CD8-positive, alpha-beta memory T cell (primary cell): ENCODE measurements at regions of chr1 and their contacts with region 1.

Region 1: DNA sequence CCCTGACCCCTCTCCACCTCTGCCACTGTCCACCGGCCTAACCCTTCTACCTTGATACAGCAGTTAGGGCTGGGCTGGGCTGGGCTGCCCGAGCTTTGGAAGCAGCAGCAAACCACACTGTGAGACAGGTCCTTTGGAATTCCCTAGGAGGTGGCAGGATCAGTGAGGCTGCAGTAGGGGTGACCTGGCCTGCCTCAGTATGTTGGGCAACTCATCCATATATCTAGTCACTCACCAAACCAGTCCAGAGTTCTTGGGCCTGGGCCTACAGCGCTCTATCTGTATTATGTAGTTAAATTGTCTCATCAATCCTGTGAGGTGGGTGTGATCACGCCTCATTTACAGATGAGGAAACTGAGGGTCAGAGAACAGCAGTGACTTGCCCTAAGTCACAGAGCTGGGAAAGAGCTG is 13.3 kb upstream of the SYNC start:
- DNase-seq: no peak
- H3K4me3 ChIP-seq: no peak overlapping the region
- H3K4me3 Mint-ChIP-seq: peak overlapping the region in 1 of 7 donors; percentile 45
- H3K27ac ChIP-seq: no peak overlapping the region
- H3K27ac Mint-ChIP-seq: peak overlapping the region in 1 of 8 donors; percentile 4
- H3K4me1 ChIP-seq: no peaks in the 10 kb centered on the region
- H3K4me1 Mint-ChIP-seq: peaks cover 4 to 22% (median 12%) of the 10 kb centered on the region in 3 donors
- H3K27me3 ChIP-seq: no peaks in the 10 kb centered on the region
- H3K27me3 Mint-ChIP-seq: peaks cover 5 to 9% of the 10 kb centered on the region in 2 donors

Region 2: GRCh38 chr1:32686387-32686786 is 29.5 kb before region 1 on chr1:
- CTCF ChIA-PET with region 1: interaction called, 11 read pairs
- POLR2A ChIA-PET with region 1: no interaction called
- DNase-seq: no peak
- H3K4me3 ChIP-seq: no peak overlapping the region
- H3K4me3 Mint-ChIP-seq: no peak overlapping the region
- H3K27ac ChIP-seq: no peak overlapping the region
- H3K27ac Mint-ChIP-seq: no peak overlapping the region
- H3K4me1 ChIP-seq: no peaks in the 10 kb centered on the region
- H3K4me1 Mint-ChIP-seq: no peaks in the 10 kb centered on the region
- H3K27me3 ChIP-seq: no peaks in the 10 kb centered on the region
- H3K27me3 Mint-ChIP-seq: no peaks in the 10 kb centered on the region

Region 3: DNA sequence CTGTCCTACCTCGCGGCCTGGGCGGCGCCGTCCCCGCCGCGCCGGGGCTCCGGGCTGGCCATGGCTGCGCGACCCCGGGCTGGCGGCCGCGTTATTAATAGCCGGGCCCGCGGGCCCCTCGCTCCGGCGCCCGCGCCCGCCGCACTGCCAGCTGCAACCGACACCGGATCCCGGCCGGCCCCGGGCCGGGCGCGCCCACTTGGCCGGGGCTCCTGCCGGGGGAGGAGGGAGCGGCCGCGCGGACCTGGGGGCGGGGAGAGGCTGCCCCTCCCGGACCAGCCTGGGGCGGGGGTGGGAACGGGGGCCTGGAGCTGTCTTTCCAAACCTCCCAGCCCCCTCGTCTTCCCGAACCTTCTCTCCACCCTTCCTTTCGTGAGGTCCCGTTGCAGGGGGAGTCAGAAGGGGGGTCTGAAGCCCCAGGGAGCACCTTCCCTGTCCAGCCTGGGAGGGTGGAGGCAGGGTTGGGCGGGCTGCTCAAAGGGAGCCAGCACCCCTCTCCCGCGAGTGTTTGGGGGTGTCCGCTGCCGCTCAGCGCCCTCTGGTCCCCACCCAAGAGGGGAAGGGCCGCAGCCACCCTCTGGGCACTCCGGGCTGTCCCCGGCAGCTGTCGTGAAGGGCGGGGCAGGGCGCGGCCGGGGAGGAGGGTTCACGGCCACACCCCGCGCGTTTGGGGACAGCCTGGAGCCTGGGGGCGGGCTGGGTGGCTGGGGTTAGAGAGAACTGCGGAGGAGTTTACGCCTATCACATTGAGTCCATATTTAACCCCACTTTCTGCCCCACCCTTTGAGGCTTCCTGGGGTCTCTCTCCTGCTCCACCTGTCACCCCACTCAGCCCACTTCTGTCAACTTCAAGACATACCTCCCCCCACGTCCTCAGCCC is 13.1 kb before region 1 on chr1 and contains the start of gene SYNC:
- CTCF ChIA-PET with region 1: interaction called, 14 read pairs
- POLR2A ChIA-PET with region 1: no interaction called
- DNase-seq: no peak
- H3K4me3 ChIP-seq: no peak within 1 kb of the TSS
- H3K4me3 Mint-ChIP-seq: peak within 1 kb of the TSS; percentile 18 to 72 (median 66)
- H3K27ac ChIP-seq: peak within 1 kb of the TSS; percentile 39
- H3K27ac Mint-ChIP-seq: peak within 1 kb of the TSS in 2 of 8 donors; percentile 17 to 97
- H3K4me1 ChIP-seq: peaks cover 8% of the 10 kb centered on the region
- H3K4me1 Mint-ChIP-seq: peaks cover 7 to 13% (median 11%) of the 10 kb centered on the region in 3 donors
- H3K27me3 ChIP-seq: peaks cover 22% of the 10 kb centered on the region
- H3K27me3 Mint-ChIP-seq: peaks cover 29 to 46% of the 10 kb centered on the region in 2 donors
- total RNA-seq, gene SYNC: not detected

Region 4: DNA sequence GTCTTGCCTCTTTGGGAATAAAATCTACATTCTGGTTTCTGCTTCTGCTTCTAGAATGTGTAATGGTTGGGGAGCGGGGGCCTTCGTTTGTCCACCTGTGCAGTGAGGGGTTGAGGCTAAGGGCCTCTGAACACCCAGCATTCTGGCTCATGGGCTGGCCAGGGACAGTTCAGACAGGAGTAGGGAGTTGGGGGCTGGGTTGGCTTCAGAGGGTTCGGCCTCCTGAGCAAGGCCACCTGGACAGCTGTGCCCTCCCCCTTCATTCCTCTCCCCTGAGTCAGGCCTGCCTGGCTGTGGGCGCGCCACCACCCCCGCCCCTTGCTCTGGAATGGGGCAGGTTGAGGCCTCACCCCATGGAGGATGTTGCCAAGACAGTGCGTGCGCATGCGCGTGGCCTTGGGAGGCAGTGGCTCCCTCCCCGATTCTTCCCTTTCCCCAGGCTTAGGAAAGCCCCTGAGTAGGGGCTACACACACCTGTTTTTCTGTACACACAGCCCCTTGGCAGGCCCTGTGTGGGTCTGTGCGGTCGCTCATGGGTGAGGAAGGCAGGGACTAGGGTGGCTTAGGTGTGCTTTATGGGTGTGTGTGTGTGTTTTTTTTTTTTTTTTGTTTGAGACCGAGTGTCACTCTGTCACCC is 44.2 kb after region 1 on chr1:
- CTCF ChIA-PET with region 1: interaction called, 10 read pairs
- POLR2A ChIA-PET with region 1: interaction called, 5 read pairs
- DNase-seq: no peak
- H3K4me3 ChIP-seq: no peak overlapping the region
- H3K4me3 Mint-ChIP-seq: no peak overlapping the region
- H3K27ac ChIP-seq: no peak overlapping the region
- H3K27ac Mint-ChIP-seq: peak overlapping the region in 5 of 8 donors; percentile 1 to 64 (median 27)
- H3K4me1 ChIP-seq: peaks cover 30% of the 10 kb centered on the region
- H3K4me1 Mint-ChIP-seq: peaks cover 7 to 30% (median 13%) of the 10 kb centered on the region in 3 donors
- H3K27me3 ChIP-seq: no peaks in the 10 kb centered on the region
- H3K27me3 Mint-ChIP-seq: no peaks in the 10 kb centered on the region

Region 5: DNA sequence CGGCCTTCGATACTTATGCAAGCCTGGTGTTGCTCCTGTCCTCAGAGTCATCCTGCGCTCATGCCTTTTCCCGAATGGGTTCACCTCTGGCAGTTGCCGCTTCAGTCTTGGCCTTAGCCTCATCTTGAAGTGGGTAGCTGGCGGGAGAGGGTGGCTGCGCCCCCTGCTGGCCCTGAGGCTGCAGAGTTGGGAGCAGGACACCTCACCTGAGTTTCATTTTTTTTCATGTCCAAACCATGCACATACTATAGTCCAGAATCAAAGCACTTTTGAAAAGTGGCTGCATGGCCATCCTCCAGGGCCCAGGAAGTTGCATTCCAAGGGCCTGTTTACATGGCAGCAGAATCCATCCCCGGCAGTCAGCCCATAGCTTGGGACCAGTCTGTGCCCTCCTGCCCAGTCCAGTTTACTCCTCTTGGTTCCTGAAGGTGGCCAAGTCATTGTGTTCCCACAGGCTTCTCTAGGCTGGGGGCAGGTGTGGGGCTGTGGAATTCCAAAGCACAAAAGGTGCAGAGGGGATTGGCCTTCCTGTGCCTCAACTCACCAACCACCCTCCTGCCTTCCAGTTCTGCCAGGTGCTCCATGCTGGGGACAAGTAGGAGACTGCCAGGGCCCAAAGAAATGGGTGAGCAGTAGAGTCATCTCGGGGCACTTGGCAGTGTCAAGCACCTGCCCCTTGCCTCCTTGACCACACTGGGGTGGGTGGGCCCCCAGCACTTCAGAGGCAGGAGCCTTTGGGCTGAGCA is 57.3 kb after region 1 on chr1:
- CTCF ChIA-PET with region 1: interaction called, 114 read pairs
- POLR2A ChIA-PET with region 1: no interaction called
- DNase-seq: peak; percentile 54 to 81 (median 61)
- H3K4me3 ChIP-seq: no peak overlapping the region
- H3K4me3 Mint-ChIP-seq: no peak overlapping the region
- H3K27ac ChIP-seq: no peak overlapping the region
- H3K27ac Mint-ChIP-seq: peak overlapping the region in 6 of 8 donors; percentile 21 to 67 (median 53)
- H3K4me1 ChIP-seq: peaks cover 4% of the 10 kb centered on the region
- H3K4me1 Mint-ChIP-seq: peaks cover 14 to 23% (median 17%) of the 10 kb centered on the region in 3 donors
- H3K27me3 ChIP-seq: no peaks in the 10 kb centered on the region
- H3K27me3 Mint-ChIP-seq: no peaks in the 10 kb centered on the region

Region 6: DNA sequence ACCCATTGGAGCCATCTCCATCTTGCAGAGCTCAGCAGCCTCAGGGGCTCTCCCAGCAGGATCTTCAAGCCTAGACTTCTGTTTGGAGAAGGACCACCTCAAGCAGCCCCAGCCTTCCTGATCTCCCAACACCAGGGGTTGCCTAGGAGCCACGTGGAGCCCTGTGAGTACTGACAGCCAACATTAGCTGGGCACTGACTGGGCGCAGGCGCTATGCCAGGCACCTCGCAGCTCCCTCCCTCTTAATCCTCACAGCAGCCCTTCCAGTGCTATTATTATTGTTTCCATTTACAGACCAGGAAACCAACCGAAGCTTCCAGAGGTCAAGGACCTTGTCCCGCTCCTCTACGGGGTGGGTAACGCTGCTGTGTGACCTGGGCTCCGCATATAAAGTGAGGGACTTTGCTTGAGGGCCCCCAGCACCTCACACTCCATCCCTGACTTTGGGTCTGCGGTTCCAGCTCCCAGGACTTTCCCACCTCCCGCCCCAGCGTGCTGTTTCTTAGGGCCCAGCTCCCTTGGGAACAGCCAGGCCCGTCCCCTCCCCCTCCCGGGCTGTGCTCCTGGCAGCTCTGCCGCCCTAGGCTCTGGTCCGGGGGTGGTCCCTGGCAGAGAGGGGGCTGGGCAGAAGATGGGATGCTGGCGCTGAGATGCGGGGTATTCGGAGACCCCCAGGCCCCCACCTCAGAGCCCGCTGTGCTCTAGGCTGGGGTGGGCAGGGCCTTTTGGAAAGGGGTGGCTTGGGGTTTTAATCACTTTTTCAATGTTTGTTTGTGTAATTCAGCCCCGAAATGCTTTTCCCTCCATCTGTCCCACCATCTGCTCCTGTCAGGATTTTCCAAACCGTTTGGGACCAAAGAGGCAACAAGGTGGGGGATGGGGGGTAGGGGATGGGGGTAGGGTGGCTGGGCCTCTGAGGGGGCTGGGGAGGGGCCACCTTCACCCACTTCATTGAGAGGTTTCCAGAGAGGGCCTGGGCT is 166.3 kb after region 1 on chr1:
- CTCF ChIA-PET with region 1: interaction called, 112 read pairs
- POLR2A ChIA-PET with region 1: no interaction called
- DNase-seq: peak in 1 of 5 donors; percentile 12
- H3K4me3 ChIP-seq: no peak overlapping the region
- H3K4me3 Mint-ChIP-seq: no peak overlapping the region
- H3K27ac ChIP-seq: no peak overlapping the region
- H3K27ac Mint-ChIP-seq: no peak overlapping the region
- H3K4me1 ChIP-seq: no peaks in the 10 kb centered on the region
- H3K4me1 Mint-ChIP-seq: peaks cover 0 to 9% (median 5%) of the 10 kb centered on the region in 3 donors
- H3K27me3 ChIP-seq: peaks cover 10% of the 10 kb centered on the region
- H3K27me3 Mint-ChIP-seq: peaks cover 19 to 50% of the 10 kb centered on the region in 2 donors

Region 7: DNA sequence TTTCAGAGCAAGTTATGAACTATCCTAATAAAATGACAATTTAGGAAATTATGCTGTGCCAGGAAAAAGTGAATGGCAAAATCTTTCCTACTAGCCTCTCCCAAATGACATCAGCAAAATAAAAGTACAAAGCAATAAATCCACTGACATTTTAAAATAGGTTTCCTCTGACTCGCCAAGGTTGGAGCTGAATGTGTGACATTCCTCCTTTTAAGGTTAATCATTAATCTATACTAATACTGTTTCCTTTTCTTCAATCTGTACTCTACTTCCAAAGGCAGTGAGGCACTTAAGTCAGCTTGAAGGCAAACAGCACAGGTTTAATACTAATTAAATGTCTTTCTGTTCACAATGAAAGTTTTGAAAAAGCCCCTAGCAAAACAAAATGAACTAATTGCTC is 233.0 kb after region 1 on chr1:
- CTCF ChIA-PET with region 1: no interaction called
- POLR2A ChIA-PET with region 1: no interaction called
- DNase-seq: no peak
- H3K4me3 ChIP-seq: no peak overlapping the region
- H3K4me3 Mint-ChIP-seq: no peak overlapping the region
- H3K27ac ChIP-seq: no peak overlapping the region
- H3K27ac Mint-ChIP-seq: peak overlapping the region in 2 of 8 donors; percentile 17
- H3K4me1 ChIP-seq: no peaks in the 10 kb centered on the region
- H3K4me1 Mint-ChIP-seq: peaks cover 18 to 44% (median 28%) of the 10 kb centered on the region in 3 donors
- H3K27me3 ChIP-seq: no peaks in the 10 kb centered on the region
- H3K27me3 Mint-ChIP-seq: no peaks in the 10 kb centered on the region